ENCODE measurements at regions of chr7 and their contacts with region 1.

Region 1: GRCh38 chr7:35801392-35802101 is 690 bp downstream of the SEPTIN7 start:
- DNase-seq: no peak
- ATAC-seq: peak; percentile 55
- H3K4me3 ChIP-seq: peak overlapping the region; percentile 95
- H3K27ac ChIP-seq: peak overlapping the region; percentile 99
- H3K4me1 ChIP-seq: peaks cover 11% of the 10 kb centered on the region; the same call in 1 of the 2 replicates
- H3K27me3 ChIP-seq: no peaks in the 10 kb centered on the region
- CTCF ChIP-seq: peak; percentile 38 to 48 (median 40)
- EP300 ChIP-seq: no peak
- POLR2A ChIP-seq: peak; percentile 71
- RAD21 ChIP-seq: peak; percentile 31; the same call in 1 of the 2 replicates

Region 2: DNA sequence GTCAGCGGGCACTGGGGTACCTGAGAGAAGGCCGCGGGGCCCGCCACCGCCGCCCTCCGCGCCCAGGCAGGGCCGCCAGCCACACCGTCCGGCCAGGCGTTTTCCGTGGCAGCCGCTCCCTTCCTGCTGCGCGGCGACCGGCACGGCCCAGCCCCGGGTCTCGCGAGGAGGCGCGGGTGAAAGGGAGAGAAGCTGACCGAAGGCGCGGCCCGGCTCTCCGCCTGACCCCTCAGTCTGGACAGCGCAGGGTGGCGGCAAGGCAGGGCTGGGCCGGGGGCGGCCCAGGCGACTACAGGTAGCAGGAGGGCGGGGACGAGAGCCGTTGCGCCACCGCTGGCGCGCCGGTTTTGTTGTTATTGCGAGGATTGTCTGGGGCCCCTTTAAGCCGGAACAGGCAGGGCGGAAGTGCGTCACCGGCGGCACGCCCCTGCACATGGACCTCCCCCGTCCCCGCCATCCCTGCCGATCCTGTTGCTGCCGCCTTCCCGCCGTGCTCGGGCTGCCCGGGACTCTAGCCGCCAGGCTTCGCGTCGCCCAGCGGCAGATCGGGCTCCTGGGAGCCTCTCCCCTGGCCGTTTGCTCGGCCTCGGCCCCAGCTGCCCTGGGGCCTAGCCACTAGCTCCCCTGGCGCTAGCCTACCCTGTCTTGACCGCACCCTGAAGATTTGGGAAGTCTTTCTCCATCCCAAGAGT is 106.6 kb before region 1 on chr7 and contains the start of gene HERPUD2:
- CTCF ChIA-PET with region 1: interaction called, 14 read pairs
- POLR2A ChIA-PET with region 1: interaction called, 12 read pairs
- RAD21 ChIA-PET with region 1: interaction called, 3 read pairs
- SMC1A ChIA-PET with region 1: interaction called, 8 read pairs
- in situ Hi-C with region 1: no loop called
- intact Hi-C with region 1: loop called (anchors 2 kb)
- DNase-seq: peak; percentile 71
- ATAC-seq: peak; percentile 86
- H3K4me3 ChIP-seq: peak within 1 kb of the TSS; percentile 94
- H3K27ac ChIP-seq: peak within 1 kb of the TSS; percentile 91
- H3K4me1 ChIP-seq: no peaks in the 10 kb centered on the region
- H3K27me3 ChIP-seq: no peaks in the 10 kb centered on the region
- CTCF ChIP-seq: no peak; a peak in 1 of 6 replicates
- EP300 ChIP-seq: 0 out of 4 replicates have a peak, but pooled peaks of 1 of the 2 experiments have one; percentile 10
- POLR2A ChIP-seq: peak; percentile 93
- RAD21 ChIP-seq: no peak
- polyA plus RNA-seq, gene HERPUD2: 4.7 to 6.8 TPM

Region 3: GRCh38 chr7:35716038-35716803 is 85.3 kb before region 1 on chr7:
- CTCF ChIA-PET with region 1: interaction called, 11 read pairs
- POLR2A ChIA-PET with region 1: interaction called, 4 read pairs
- RAD21 ChIA-PET with region 1: interaction called, 273 read pairs
- SMC1A ChIA-PET with region 1: interaction called, 76 read pairs
- in situ Hi-C with region 1: no loop called
- intact Hi-C with region 1: no loop called
- DNase-seq: no peak
- ATAC-seq: no peak
- H3K4me3 ChIP-seq: no peak overlapping the region
- H3K27ac ChIP-seq: no peak overlapping the region
- H3K4me1 ChIP-seq: peaks cover 7% of the 10 kb centered on the region
- H3K27me3 ChIP-seq: no peaks in the 10 kb centered on the region
- CTCF ChIP-seq: no peak
- EP300 ChIP-seq: no peak
- POLR2A ChIP-seq: no peak
- RAD21 ChIP-seq: no peak

Region 4: DNA sequence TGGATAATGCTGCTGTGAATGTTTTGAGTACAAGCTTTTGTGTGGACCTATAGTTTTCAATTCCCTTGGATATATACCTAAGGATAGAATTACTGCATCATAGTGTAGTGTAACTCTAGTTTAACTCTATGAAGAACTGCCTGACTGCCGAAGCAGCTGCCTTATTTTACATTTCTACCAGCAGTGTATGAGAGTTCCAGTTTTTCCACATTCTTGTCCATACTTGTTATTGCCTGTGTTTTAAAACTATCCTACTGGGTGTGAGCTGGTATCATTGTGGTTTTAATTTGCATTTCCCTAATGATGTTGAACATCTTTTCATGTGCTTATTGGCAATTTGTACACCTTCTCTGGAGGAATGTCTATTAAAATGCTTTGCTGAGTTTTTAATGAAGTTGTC is 15.0 kb after region 1 on chr7:
- CTCF ChIA-PET with region 1: interaction called, 10 read pairs
- POLR2A ChIA-PET with region 1: interaction called, 16 read pairs
- RAD21 ChIA-PET with region 1: interaction called, 6 read pairs
- SMC1A ChIA-PET with region 1: interaction called, 39 read pairs
- in situ Hi-C with region 1: no loop called
- intact Hi-C with region 1: no loop called
- DNase-seq: no peak
- ATAC-seq: no peak
- H3K4me3 ChIP-seq: no peak overlapping the region
- H3K27ac ChIP-seq: no peak overlapping the region
- H3K4me1 ChIP-seq: peaks cover 6% of the 10 kb centered on the region
- H3K27me3 ChIP-seq: no peaks in the 10 kb centered on the region
- CTCF ChIP-seq: no peak
- EP300 ChIP-seq: no peak
- POLR2A ChIP-seq: no peak
- RAD21 ChIP-seq: no peak

Region 5: GRCh38 chr7:35856175-35856574 is 54.6 kb after region 1 on chr7:
- CTCF ChIA-PET with region 1: interaction called, 8 read pairs
- POLR2A ChIA-PET with region 1: interaction called, 5 read pairs
- RAD21 ChIA-PET with region 1: no interaction called
- SMC1A ChIA-PET with region 1: interaction called, 3 read pairs
- in situ Hi-C with region 1: no loop called
- intact Hi-C with region 1: loop called (anchors 5 kb)
- DNase-seq: no peak
- ATAC-seq: no peak
- H3K4me3 ChIP-seq: no peak overlapping the region
- H3K27ac ChIP-seq: no peak overlapping the region
- H3K4me1 ChIP-seq: no peaks in the 10 kb centered on the region
- H3K27me3 ChIP-seq: no peaks in the 10 kb centered on the region
- CTCF ChIP-seq: no peak
- EP300 ChIP-seq: no peak
- POLR2A ChIP-seq: no peak
- RAD21 ChIP-seq: no peak

Measured in GM12878 (cell line).